ENCODE measurements at regions of chr17 and their contacts with region 1.

Region 1: DNA sequence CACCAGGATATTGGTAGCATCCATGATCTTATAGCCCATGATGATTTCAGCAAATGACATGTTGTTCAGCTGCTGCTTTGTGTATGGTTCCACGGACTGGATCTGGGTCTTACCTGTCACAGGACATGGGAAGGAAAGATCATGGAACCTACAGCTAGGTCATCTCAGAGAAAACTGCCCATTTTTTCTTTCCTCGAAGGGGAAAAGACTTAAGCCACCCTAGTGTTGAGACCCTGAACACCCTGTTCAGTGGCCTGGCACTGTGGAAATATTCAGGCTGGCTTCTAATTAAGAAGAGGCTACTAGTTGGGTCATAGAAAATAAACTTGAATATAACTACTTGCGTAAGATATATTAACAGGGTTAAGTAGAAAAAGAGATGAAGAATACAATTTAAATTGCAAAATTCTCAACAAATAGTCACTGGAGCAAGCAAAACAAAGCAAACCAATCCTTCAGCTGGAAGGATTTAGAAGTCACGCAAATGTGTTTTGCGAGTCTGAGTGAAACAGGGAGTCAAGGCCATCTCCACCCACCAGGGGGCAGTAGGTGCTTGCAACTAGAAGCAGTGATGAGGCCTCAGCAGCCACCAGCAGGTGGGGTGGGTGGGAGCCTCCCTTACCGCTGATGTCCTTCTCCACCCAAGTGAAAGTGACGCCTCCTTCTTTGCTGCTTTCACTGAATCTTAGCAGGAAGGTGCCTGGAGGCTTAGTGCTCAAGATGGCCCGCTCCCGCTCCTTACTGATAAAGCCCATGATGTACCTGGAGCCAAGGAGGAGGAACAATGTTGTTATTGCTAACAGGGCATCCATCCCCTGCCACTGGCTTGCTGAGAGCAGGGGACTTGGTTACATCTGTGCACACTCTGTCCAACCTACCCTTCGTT is 34.3 kb downstream of the STAT5A start:
- DNase-seq: peak; percentile 94
- ATAC-seq: peak; percentile 98
- H3K4me3 ChIP-seq: no peak overlapping the region
- H3K4me3 Mint-ChIP-seq: no peak overlapping the region
- H3K27ac ChIP-seq: no peak overlapping the region
- H3K27ac Mint-ChIP-seq: peak overlapping the region; percentile 77
- H3K4me1 ChIP-seq: peaks cover 12 to 27% of the 10 kb centered on the region in 2 donors
- H3K4me1 Mint-ChIP-seq: peaks cover 26% of the 10 kb centered on the region
- H3K27me3 ChIP-seq: no peaks in the 10 kb centered on the region
- H3K27me3 Mint-ChIP-seq: no peaks in the 10 kb centered on the region
- CTCF ChIP-seq: peak; percentile 99

Region 2: DNA sequence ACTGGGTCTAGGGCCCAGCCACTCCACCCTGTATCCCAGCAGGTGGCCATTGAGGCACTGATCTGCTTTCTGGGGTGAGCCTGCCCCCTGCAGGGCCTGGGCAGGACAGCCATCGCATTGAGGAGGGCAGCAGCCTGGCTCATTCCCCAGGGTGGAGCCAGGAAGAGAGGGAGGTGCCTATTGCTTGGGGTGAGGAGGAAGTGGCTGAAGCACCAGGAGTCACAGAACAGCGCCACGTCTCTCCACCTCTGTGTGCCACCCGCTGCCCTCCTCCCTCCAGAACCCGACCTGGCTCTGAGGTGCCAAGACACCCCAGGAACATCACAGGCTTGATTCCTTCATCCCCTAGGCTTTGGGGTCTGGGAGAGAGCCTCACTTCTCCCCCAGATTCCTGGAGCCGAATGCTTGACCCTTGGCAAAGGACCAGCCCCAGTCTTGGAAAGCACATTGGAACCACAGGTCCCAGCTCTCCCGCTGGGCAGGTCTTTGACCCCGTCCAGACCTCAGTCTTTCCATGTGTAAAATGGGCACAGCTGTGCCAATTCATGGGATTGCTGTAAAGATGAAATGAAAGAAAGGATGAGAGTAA is 825.7 kb before region 1 on chr17:
- CTCF ChIA-PET with region 1: no interaction called
- POLR2A ChIA-PET with region 1: no interaction called
- intact Hi-C with region 1: no loop called
- DNase-seq: peak; percentile 28
- ATAC-seq: peak; percentile 47
- H3K4me3 ChIP-seq: no peak overlapping the region
- H3K4me3 Mint-ChIP-seq: no peak overlapping the region
- H3K27ac ChIP-seq: no peak overlapping the region
- H3K27ac Mint-ChIP-seq: no peak overlapping the region
- H3K4me1 ChIP-seq: peaks cover 0 to 20% of the 10 kb centered on the region in 2 donors
- H3K4me1 Mint-ChIP-seq: peaks cover 6% of the 10 kb centered on the region
- H3K27me3 ChIP-seq: peaks cover 0 to 3% (median 0%) of the 10 kb centered on the region in 4 experiments
- H3K27me3 Mint-ChIP-seq: peaks cover 36% of the 10 kb centered on the region
- CTCF ChIP-seq: no peak

Region 3: GRCh38 chr17:42312285-42313130 is 10.1 kb before region 1 on chr17:
- CTCF ChIA-PET with region 1: interaction called, 58 read pairs
- POLR2A ChIA-PET with region 1: no interaction called
- intact Hi-C with region 1: loop called (anchors 1 kb)
- DNase-seq: peak; percentile 87
- ATAC-seq: peak; percentile 72
- H3K4me3 ChIP-seq: peak overlapping the region in 4 of 5 experiments; percentile 29 to 64 (median 44)
- H3K4me3 Mint-ChIP-seq: peak overlapping the region; percentile 66
- H3K27ac ChIP-seq: no peak overlapping the region
- H3K27ac Mint-ChIP-seq: no peak overlapping the region
- H3K4me1 ChIP-seq: peaks cover 44 to 52% of the 10 kb centered on the region in 2 donors
- H3K4me1 Mint-ChIP-seq: peaks cover 51% of the 10 kb centered on the region
- H3K27me3 ChIP-seq: no peaks in the 10 kb centered on the region
- H3K27me3 Mint-ChIP-seq: no peaks in the 10 kb centered on the region
- CTCF ChIP-seq: peak; percentile 76

Region 4: GRCh38 chr17:42399948-42400843 is 77.6 kb after region 1 on chr17:
- CTCF ChIA-PET with region 1: interaction called, 546 read pairs
- POLR2A ChIA-PET with region 1: no interaction called
- intact Hi-C with region 1: no loop called
- DNase-seq: no peak
- ATAC-seq: no peak
- H3K4me3 ChIP-seq: no peak overlapping the region
- H3K4me3 Mint-ChIP-seq: no peak overlapping the region
- H3K27ac ChIP-seq: no peak overlapping the region
- H3K27ac Mint-ChIP-seq: no peak overlapping the region
- H3K4me1 ChIP-seq: no peaks in the 10 kb centered on the region
- H3K4me1 Mint-ChIP-seq: no peaks in the 10 kb centered on the region
- H3K27me3 ChIP-seq: peaks cover 0 to 10% (median 0%) of the 10 kb centered on the region in 4 experiments
- H3K27me3 Mint-ChIP-seq: no peaks in the 10 kb centered on the region
- CTCF ChIP-seq: no peak

Region 5: DNA sequence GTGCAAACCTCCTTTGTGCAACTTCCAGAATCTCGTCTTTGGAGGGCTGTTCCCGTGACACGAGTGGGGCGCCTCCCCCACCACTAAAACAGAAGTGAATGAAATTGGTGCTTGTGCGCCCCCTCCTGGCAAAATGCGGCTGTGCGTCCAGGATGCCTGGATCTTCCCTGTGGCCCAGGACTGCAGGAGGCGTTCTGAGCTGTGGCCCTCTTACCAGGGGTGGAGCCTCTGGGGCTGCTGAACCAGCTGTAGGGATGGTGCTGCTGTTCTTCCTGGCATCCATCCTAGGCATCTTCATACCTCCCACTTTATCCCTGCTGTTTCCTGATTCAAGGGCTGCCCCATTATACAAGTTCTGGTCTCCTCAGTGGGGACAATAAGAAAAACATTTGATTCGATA is 194.9 kb after region 1 on chr17:
- CTCF ChIA-PET with region 1: interaction called, 12 read pairs
- POLR2A ChIA-PET with region 1: no interaction called
- intact Hi-C with region 1: loop called (anchors 1 kb)
- DNase-seq: peak; percentile 87
- ATAC-seq: peak; percentile 90
- H3K4me3 ChIP-seq: no peak overlapping the region
- H3K4me3 Mint-ChIP-seq: no peak overlapping the region
- H3K27ac ChIP-seq: no peak overlapping the region
- H3K27ac Mint-ChIP-seq: peak overlapping the region; percentile 53
- H3K4me1 ChIP-seq: peaks cover 0 to 7% of the 10 kb centered on the region in 2 donors
- H3K4me1 Mint-ChIP-seq: peaks cover 3% of the 10 kb centered on the region
- H3K27me3 ChIP-seq: no peaks in the 10 kb centered on the region
- H3K27me3 Mint-ChIP-seq: no peaks in the 10 kb centered on the region
- CTCF ChIP-seq: peak; percentile 91

Region 6: GRCh38 chr17:42527273-42527703 is 204.7 kb after region 1 on chr17:
- CTCF ChIA-PET with region 1: interaction called, 10 read pairs
- POLR2A ChIA-PET with region 1: interaction called, 6 read pairs
- intact Hi-C with region 1: loop called (anchors 1 kb)
- DNase-seq: peak; percentile 79
- ATAC-seq: peak; percentile 68
- H3K4me3 ChIP-seq: no peak overlapping the region
- H3K4me3 Mint-ChIP-seq: no peak overlapping the region
- H3K27ac ChIP-seq: no peak overlapping the region
- H3K27ac Mint-ChIP-seq: peak overlapping the region; percentile 28
- H3K4me1 ChIP-seq: peaks cover 24 to 37% of the 10 kb centered on the region in 2 donors
- H3K4me1 Mint-ChIP-seq: peaks cover 26% of the 10 kb centered on the region
- H3K27me3 ChIP-seq: no peaks in the 10 kb centered on the region
- H3K27me3 Mint-ChIP-seq: no peaks in the 10 kb centered on the region
- CTCF ChIP-seq: peak; percentile 80

Measured in B cell (primary cell).